A549 (cell line): ENCODE measurements at regions of chr6 and their contacts with region 1.

Region 1: DNA sequence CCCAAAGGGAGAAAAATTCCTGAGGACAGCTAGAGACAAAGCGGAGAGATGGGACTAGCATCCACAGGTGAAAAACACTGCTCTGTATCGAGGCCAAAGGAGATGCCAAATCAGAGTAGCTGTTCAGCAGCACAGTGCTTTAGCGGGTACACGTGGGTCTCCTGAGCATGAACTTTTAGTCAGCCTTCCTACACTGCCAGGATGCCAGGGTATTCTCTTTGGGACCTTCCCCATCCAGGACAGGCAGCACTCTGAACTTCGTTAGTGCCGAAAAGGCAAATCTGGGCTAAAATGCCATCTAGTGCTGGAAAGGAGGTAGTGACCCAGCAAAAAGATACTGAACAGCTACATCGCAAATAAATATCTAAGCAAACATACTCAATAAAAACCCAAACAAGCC is 64.9 kb downstream of the C6orf58 start:
- DNase-seq: peak; percentile 15 to 39
- ATAC-seq: peak; percentile 77 to 89; a peak in 5 of 6 replicates
- H3K4me3 ChIP-seq: no peak overlapping the region
- H3K27ac ChIP-seq: no peak overlapping the region
- H3K4me1 ChIP-seq: peaks cover 5% of the 10 kb centered on the region; the same call in 1 of the 3 replicates
- CTCF ChIP-seq: peak; percentile 63
- EP300 ChIP-seq: no peak
- POLR2A ChIP-seq: no peak
- RAD21 ChIP-seq: peak; percentile 63 to 77

Region 2: DNA sequence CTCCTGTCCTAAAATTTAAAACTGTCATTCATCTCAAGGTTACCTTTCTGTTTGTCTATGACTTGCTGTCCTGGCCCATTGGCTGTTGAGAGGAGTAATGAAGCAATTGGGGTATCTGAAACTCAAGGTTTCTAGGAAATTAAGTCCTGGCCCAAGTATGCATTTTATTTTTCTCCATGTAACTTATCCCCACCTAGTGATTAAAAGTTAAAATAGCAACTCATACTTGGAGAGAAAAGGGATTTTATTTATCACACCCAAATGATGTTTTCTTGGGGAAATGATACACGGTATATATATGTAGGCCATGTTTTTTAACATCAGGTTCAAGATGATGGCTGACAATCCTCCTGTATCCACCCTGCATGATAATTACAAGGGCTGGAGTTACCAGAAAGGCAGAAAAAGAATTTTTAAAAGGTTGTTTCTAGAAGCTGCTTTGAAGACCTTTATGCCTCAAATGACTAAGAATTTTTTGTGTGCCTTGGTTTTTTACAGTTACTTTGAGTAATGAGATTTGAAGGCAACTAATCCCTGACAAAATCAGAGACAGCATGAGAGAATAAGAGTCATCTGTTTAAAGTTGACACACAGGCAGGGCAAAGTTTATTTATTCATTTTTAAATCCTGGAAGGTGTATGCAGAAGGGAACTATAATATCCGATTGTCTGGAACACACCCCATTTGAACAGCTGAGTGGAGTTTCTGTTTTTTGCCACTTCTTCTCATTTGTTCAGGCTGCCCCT is 93.8 kb before region 1 on chr6:
- CTCF ChIA-PET with region 1: interaction called, 10 read pairs
- POLR2A ChIA-PET with region 1: no interaction called
- DNase-seq: no peak
- ATAC-seq: peak; percentile 43 to 44; a peak in 4 of 6 replicates
- H3K4me3 ChIP-seq: no peak overlapping the region
- H3K27ac ChIP-seq: no peak overlapping the region
- H3K4me1 ChIP-seq: no peaks in the 10 kb centered on the region
- CTCF ChIP-seq: peak; percentile 35
- EP300 ChIP-seq: no peak
- POLR2A ChIP-seq: no peak
- RAD21 ChIP-seq: peak; percentile 28 to 47; a peak in 2 of 5 replicates

Region 3: DNA sequence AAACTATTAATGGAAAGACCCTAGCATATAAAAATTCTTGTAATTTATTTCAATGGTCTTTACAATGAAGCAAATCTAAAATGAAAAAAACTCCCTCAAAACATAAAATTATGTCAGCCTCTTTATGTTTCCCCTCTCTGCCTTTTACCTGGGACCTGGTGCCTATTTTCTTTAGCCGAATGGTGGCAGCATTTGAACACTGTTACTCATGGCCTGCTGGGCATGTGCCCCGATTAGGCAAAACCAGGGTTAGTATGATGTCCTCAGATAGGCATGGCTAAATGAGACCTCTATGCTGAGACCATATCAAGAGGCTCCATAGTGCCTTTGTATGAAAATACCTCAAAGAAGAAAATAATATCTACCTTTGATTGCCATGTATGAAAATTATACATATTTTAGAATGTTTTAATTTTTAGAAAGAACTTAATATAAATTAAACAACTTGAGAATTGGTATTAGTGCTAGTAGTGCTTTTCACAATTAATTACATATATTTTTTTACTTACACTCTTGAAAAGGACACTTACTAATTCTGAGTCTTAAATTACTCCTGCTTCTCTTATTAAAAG is 87.4 kb before region 1 on chr6:
- CTCF ChIA-PET with region 1: interaction called, 10 read pairs
- POLR2A ChIA-PET with region 1: no interaction called
- DNase-seq: peak; percentile 33 to 51
- ATAC-seq: peak; percentile 89 to 98
- H3K4me3 ChIP-seq: no peak overlapping the region
- H3K27ac ChIP-seq: no peak overlapping the region
- H3K4me1 ChIP-seq: no peaks in the 10 kb centered on the region
- CTCF ChIP-seq: peak; percentile 78
- EP300 ChIP-seq: no peak
- POLR2A ChIP-seq: no peak
- RAD21 ChIP-seq: peak; percentile 82 to 89

Region 4: GRCh38 chr6:127576874-127577273 is 65.0 kb before region 1 on chr6 and contains the start of gene C6orf58:
- CTCF ChIA-PET with region 1: no interaction called
- POLR2A ChIA-PET with region 1: no interaction called
- DNase-seq: no peak
- ATAC-seq: no peak
- H3K4me3 ChIP-seq: no peak within 1 kb of the TSS
- H3K27ac ChIP-seq: no peak within 1 kb of the TSS
- H3K4me1 ChIP-seq: no peaks in the 10 kb centered on the region
- CTCF ChIP-seq: no peak
- EP300 ChIP-seq: no peak
- POLR2A ChIP-seq: no peak
- RAD21 ChIP-seq: no peak
- polyA plus RNA-seq, gene C6orf58: 0.12 and 0.20 TPM in 2 replicates

Region 5: DNA sequence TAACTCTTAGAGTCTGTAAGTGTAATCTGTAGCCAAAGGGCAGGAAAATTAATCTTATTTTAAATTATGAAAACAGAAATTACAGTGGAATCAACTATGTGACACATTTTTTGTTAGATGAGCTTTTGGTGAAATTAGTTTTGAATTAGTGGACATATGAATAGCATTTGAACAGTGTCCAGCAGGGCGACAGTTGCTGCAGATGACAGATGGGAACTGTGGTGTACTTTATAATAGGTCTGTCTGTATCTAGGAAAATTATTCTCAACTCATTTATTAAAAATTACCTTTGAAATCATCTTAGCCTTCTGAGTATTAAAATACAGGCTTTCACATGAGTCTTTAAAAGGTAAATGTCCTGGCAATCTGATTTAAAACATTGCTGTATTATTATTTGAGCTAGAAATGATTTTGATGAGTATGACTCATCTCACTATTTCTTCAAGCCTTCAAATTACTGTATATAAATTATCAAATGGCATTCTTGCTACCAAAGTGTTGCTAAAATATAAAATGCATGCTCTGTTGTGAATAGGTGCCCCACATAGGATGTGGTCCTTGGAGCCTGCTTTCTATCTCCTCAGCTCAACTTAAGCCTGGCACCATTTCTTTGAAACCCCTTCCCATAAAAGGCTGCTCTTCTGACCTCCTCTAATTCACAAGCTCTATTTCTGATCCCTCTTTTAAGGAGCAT is 85.5 kb after region 1 on chr6:
- CTCF ChIA-PET with region 1: no interaction called
- POLR2A ChIA-PET with region 1: no interaction called
- DNase-seq: no peak
- ATAC-seq: no peak
- H3K4me3 ChIP-seq: no peak overlapping the region
- H3K27ac ChIP-seq: no peak overlapping the region
- H3K4me1 ChIP-seq: no peaks in the 10 kb centered on the region
- CTCF ChIP-seq: no peak
- EP300 ChIP-seq: no peak
- POLR2A ChIP-seq: no peak
- RAD21 ChIP-seq: no peak